Dorsolateral prefrontal cortex (tissue), 120 donors: ENCODE measurements at regions of chr10 and their contacts with region 1.

Region 1: DNA sequence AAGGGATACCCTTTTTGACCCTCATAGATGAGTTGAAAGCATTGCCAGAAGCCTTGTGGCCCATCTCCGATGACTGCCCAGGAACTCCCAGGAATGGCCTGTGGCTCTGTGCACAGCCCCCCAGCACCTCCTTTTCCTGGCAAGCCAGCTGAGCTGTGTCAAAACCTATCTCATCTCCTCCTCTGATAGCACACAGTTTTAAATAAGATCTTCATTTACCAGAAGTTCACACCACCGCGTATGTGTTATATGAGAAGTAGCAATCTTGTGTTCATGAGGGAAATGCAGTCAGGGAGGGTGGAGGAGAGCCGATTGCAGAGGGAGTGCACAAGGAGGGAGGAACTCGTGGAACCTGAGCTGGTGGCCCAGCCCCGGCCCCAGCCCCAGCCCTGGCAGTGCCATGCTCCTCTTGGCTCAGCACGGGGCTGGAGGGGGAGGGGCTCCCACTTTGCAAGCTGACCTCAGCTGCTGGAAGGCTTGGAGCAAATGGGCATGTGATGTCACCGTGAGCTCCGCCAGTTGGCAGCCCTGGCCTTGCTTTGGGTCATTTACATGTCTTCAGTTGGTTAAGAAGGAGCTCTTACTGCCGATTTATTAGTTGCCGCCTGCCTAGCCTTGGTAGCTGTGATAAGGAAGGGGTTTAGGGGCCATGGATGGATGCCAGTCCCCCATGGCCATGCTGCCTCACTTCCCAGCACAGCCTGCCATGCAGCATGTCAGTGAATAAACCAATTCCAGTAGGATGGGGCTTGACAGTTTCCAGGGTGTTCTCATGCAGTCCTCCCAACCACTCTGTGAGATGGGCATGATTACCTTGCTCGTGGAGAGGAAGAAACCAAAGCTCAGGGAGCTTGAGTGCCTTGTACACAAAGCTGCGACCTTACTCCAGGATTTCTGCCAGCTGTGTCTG is 20.0 kb downstream of the UNC5B start:
- DNase-seq: peak; percentile 90 to 99 (median 96)
- H3K4me3 ChIP-seq: peak overlapping the region in 29 of 59 donors; percentile 1 to 37 (median 14)
- H3K27ac ChIP-seq: peak overlapping the region; percentile 82 to 100 (median 98)
- H3K27me3 ChIP-seq: no peaks in the 10 kb centered on the region
- CTCF ChIP-seq: peak in 12 of 56 donors; percentile 2 to 46 (median 22)

Region 2: DNA sequence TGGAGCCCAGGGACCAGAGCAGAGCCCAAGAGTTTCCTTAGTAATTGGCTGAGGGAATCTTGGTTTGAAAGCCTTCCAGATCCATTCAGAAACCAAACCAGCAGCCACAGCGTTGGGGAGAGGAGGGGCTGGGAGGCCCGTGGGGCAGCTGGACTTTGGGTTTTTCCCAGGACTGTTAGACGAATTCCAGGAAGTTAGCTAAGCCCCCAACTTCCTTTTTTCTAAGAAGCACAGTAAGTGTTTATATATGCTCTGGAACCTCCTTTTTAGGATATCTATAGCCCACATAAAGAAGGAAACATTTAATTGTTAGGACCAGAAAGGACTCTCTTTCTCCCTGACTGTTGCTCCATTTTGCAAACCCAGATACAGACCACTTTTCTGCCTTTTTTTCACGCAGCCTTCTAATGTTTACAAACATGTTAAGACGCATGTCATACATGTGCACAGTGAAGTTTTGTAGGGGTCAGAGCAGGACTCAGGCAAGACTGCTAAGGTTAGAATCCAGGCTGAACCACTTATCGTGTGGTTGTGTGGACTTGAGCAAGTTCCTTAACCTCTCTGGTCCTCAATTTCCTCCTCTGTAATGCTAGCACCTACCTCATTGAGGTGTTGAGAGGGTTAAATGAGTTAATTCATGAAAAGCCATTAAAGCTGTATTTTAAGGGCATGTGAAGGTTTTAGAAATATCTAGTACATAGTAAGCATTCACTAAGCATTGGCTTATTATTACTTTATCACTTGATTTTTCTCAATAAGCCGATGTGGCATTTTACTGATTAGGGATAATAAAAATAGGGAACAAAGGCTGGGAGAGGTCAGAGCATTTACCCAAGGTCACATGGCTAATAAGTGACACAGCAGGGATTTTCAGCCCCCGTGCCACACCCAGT is 489.6 kb before region 1 on chr10:
- intact Hi-C with region 1: no loop called
- DNase-seq: peak in 1 of 10 donors; percentile 21
- H3K4me3 ChIP-seq: no peak overlapping the region
- H3K27ac ChIP-seq: peak overlapping the region in 1 of 59 donors; percentile 22
- H3K27me3 ChIP-seq: no peaks in the 10 kb centered on the region
- CTCF ChIP-seq: no peak

Region 3: GRCh38 chr10:71260622-71261325 is 28.4 kb after region 1 on chr10:
- intact Hi-C with region 1: loop called in 1 of 2 experiments (anchors 2 kb)
- DNase-seq: peak in 8 of 10 donors; percentile 52 to 91 (median 78)
- H3K4me3 ChIP-seq: peak overlapping the region in 7 of 59 donors; percentile 1 to 33 (median 11)
- H3K27ac ChIP-seq: peak overlapping the region; percentile 17 to 94 (median 84)
- H3K27me3 ChIP-seq: no peaks in the 10 kb centered on the region
- CTCF ChIP-seq: peak in 7 of 56 donors; percentile 3 to 11 (median 9)